AG04449 (cell line): ENCODE measurements at regions of chr3 and their contacts with region 1.

Region 1: GRCh38 chr3:112519424-112520001 is 20.2 kb upstream of the BTLA start:
- DNase-seq: peak; percentile 40
- H3K4me3 ChIP-seq: no peak overlapping the region
- CTCF ChIP-seq: peak; percentile 70

Region 2: DNA sequence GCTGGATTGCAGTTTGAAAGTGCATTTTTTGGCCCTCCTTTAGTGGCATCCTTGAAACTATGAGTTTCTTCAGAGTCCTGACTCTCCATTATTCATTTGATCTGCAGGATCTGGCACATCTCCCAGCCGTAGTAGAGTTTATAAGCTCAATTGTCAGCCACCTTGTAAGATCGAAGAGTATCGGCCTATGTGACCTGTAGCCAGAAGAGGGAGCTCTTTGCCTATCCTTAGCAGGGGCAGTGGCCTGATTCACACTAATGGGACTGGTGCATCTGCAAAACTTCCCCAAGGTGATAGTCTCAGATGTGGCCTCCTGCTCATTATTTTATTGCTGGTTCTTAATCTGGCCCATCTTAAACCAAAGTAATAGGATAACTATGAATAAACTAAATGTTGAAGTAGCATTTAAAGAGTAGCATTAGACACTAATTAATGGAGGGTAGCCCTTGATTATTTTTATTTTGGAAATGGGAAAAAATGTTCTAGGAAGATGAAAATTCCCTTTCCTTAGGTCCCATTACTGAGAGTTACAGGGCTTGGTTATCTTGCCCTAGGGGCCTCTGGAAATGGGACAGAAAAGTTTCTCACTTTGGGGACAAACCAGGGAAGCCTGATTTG is 407.6 kb before region 1 on chr3:
- CTCF ChIA-PET with region 1: interaction called, 16 read pairs
- POLR2A ChIA-PET with region 1: no interaction called
- DNase-seq: no peak
- H3K4me3 ChIP-seq: no peak overlapping the region
- CTCF ChIP-seq: peak; percentile 80

Region 3: DNA sequence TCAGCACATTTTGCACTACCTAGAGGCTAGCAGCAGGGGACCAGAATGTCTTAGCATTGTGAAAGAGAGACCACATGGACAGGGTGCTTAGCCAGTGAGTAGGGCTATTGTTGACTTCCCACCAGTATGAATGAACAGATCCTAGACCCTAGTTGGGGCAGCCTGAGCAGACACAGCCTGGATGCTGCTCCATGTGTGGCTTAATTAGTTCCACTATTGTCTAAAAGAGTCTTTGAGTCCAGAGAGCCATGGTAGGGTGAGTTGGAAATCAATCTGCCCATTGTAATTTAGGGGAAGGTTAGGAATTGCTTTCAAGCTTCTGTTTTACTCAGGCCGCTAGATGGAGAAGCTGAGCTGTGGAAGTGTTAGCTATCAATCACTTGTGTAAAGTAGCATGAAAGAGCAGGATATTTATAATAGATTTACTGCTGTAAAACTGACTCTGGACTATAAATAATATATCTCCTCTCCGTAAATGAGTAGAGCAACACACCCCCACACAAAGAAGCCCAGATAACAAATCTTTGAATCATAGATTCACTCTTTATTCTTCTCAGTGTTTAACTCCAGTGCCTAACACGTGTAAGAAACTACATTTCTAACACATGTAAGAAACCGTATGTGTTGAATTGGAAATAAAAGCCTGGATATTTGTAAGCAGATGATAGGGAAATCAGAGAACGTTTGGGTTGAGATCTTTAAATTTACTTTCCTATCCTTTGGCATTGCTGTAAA is 382.4 kb before region 1 on chr3:
- CTCF ChIA-PET with region 1: interaction called, 42 read pairs
- POLR2A ChIA-PET with region 1: no interaction called
- DNase-seq: no peak
- H3K4me3 ChIP-seq: no peak overlapping the region
- CTCF ChIP-seq: peak; percentile 47

Region 4: GRCh38 chr3:112293368-112294321 is 225.9 kb before region 1 on chr3 and contains the start of gene SLC9C1:
- CTCF ChIA-PET with region 1: interaction called, 122 read pairs
- POLR2A ChIA-PET with region 1: no interaction called
- DNase-seq: no peak
- H3K4me3 ChIP-seq: peak within 1 kb of the TSS; percentile 31
- CTCF ChIP-seq: peak; percentile 66

Region 5: GRCh38 chr3:112303764-112304325 is 215.7 kb before region 1 on chr3:
- CTCF ChIA-PET with region 1: interaction called, 12 read pairs
- POLR2A ChIA-PET with region 1: no interaction called
- DNase-seq: no peak
- H3K4me3 ChIP-seq: peak overlapping the region; percentile 54
- CTCF ChIP-seq: no peak

Region 6: GRCh38 chr3:112327371-112327951 is 192.1 kb before region 1 on chr3:
- CTCF ChIA-PET with region 1: interaction called, 94 read pairs
- POLR2A ChIA-PET with region 1: no interaction called
- DNase-seq: peak; percentile 7
- H3K4me3 ChIP-seq: no peak overlapping the region
- CTCF ChIP-seq: peak; percentile 64

Region 7: DNA sequence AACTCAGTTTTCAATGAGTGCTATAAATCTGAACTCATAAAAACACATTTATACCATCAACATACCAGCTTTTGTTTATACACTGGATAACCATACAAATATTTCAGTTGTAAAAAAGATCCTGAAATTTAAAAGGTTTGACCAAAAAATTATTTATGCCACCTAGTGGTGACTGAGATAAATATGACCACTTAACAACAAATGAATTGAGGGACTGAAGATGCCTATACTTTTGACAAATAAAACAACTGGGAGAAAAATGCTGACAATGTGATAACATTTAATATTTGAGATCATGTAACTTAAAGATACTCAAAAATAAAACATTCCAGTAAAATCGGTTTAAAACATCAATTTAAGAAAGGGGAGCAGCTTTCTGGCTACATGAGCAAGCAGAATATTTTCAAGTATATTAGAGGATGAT is 11.9 kb after region 1 on chr3:
- CTCF ChIA-PET with region 1: interaction called, 23 read pairs
- POLR2A ChIA-PET with region 1: no interaction called
- DNase-seq: no peak
- H3K4me3 ChIP-seq: no peak overlapping the region
- CTCF ChIP-seq: no peak